ENCODE measurements at regions of chr9 and their contacts with region 1.

Region 1: GRCh38 chr9:91101611-91102168 is 260.0 kb downstream of the AUH start:
- DNase-seq: peak; percentile 97
- ATAC-seq: peak; percentile 92
- H3K4me3 Mint-ChIP-seq: peak overlapping the region; percentile 65
- H3K27ac Mint-ChIP-seq: peak overlapping the region; percentile 94
- H3K4me1 Mint-ChIP-seq: peaks cover 75% of the 10 kb centered on the region
- H3K27me3 Mint-ChIP-seq: no peaks in the 10 kb centered on the region

Region 2: GRCh38 chr9:90631964-90632363 is 469.7 kb before region 1 on chr9:
- CTCF ChIA-PET with region 1: no interaction called
- POLR2A ChIA-PET with region 1: no interaction called
- DNase-seq: no peak
- ATAC-seq: no peak
- H3K4me3 Mint-ChIP-seq: no peak overlapping the region
- H3K27ac Mint-ChIP-seq: no peak overlapping the region
- H3K4me1 Mint-ChIP-seq: no peaks in the 10 kb centered on the region
- H3K27me3 Mint-ChIP-seq: no peaks in the 10 kb centered on the region

Region 3: GRCh38 chr9:91071185-91071990 is 30.3 kb before region 1 on chr9:
- CTCF ChIA-PET with region 1: interaction called, 4 read pairs
- POLR2A ChIA-PET with region 1: interaction called, 11 read pairs
- DNase-seq: peak; percentile 69
- ATAC-seq: peak; percentile 89
- H3K4me3 Mint-ChIP-seq: no peak overlapping the region
- H3K27ac Mint-ChIP-seq: peak overlapping the region; percentile 53
- H3K4me1 Mint-ChIP-seq: peaks cover 13% of the 10 kb centered on the region
- H3K27me3 Mint-ChIP-seq: no peaks in the 10 kb centered on the region

Region 4: DNA sequence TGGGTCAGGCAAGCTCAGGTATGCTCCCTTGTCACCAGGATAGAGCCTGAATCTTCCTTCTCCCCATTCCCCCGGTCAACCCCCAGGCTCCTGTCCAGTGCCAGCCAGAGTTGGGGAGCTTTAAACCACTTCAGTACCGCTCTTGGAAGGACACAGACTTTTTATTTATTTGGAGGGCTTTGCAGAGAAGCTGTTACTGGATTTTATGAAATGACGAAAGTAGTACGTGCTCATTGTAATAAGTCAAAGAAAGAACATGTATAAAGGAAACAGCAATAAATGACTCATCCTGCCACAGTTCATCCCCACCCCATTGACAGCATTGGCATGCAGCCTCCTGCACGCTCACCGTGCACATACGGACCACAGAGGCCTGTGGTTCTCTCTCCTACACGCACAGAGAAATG is 29.7 kb after region 1 on chr9:
- CTCF ChIA-PET with region 1: interaction called, 9 read pairs
- POLR2A ChIA-PET with region 1: interaction called, 25 read pairs
- DNase-seq: peak; percentile 89
- ATAC-seq: peak; percentile 100
- H3K4me3 Mint-ChIP-seq: peak overlapping the region; percentile 26
- H3K27ac Mint-ChIP-seq: peak overlapping the region; percentile 88
- H3K4me1 Mint-ChIP-seq: peaks cover 44% of the 10 kb centered on the region
- H3K27me3 Mint-ChIP-seq: no peaks in the 10 kb centered on the region

Region 5: DNA sequence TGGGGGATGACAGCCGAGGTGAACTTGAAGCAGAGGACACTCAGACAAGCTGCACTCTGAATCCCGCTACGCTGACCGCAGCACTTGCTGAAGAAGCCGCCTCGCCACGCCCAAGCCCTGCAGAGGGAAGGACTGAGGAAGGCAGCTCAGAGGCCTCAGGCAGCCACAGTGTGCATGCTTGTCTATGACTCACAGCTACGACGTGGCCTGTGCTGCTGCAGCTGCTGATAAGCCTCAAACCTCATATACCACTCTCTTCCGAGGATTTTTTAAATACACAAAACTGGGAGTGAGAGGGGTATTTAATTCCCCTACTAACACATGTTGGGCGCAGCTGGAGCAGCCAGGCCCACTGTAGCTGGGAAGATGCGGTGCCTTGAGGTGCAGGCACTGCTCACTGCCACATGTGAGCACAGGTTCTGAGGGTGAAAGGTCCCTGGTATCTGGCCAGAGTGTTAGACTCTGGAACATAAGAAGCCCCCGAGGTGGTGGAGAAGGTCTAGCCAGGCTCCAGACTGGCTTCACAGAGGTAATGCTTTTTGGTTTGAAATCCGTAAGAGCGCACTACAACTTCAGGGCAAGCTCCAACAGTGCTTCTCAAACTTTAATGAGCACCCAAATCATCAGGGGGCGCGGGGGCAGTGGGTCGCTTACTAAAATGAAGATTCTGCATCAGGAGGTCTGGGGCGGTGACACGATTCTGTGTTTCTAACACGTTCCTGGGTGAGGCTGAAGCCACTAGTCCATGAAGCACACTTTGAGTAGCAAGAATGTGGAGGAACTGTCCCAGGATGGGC is 63.2 kb after region 1 on chr9:
- CTCF ChIA-PET with region 1: no interaction called
- POLR2A ChIA-PET with region 1: interaction called, 22 read pairs
- DNase-seq: peak; percentile 91
- ATAC-seq: peak; percentile 86
- H3K4me3 Mint-ChIP-seq: peak overlapping the region; percentile 80
- H3K27ac Mint-ChIP-seq: peak overlapping the region; percentile 96
- H3K4me1 Mint-ChIP-seq: peaks cover 67% of the 10 kb centered on the region
- H3K27me3 Mint-ChIP-seq: no peaks in the 10 kb centered on the region

Region 6: GRCh38 chr9:91253488-91253887 is 151.8 kb after region 1 on chr9:
- CTCF ChIA-PET with region 1: interaction called, 12 read pairs
- POLR2A ChIA-PET with region 1: no interaction called
- DNase-seq: peak; percentile 74
- ATAC-seq: peak; percentile 99
- H3K4me3 Mint-ChIP-seq: no peak overlapping the region
- H3K27ac Mint-ChIP-seq: no peak overlapping the region
- H3K4me1 Mint-ChIP-seq: peaks cover 48% of the 10 kb centered on the region
- H3K27me3 Mint-ChIP-seq: no peaks in the 10 kb centered on the region